K562 (cell line): ENCODE measurements at regions of chr15 and their contacts with region 1.

Region 1: DNA sequence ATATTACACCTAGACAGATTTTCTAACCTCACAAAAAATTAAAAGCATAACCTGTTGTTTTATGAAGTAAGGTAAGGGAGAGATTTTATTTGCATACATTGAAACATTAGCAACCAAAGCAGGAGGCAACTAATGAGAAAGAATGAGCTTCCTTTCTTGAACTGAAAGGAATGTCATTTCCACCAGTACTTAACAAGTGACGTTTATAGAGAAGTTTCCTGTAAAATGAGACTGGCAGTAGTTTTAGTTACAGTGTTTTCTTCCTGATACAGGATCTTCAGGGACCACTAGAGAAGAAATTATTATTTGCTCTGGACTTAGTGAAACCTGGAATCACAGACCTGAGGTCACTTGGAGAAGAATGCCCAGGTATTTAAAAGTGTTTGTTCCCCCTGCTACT is 27.4 kb upstream of the FRMD5 start:
- DNase-seq: no peak
- ATAC-seq: no peak
- H3K4me3 ChIP-seq: no peak overlapping the region
- H3K27ac ChIP-seq: no peak overlapping the region
- H3K4me1 ChIP-seq: no peaks in the 10 kb centered on the region; a peak in 1 of 5 replicates
- H3K27me3 ChIP-seq: peaks cover 0 to 5% of the 10 kb centered on the region in 2 experiments; a peak in 1 of 5 replicates
- CTCF ChIP-seq: no peak
- EP300 ChIP-seq: no peak
- POLR2A ChIP-seq: no peak
- RAD21 ChIP-seq: no peak

Region 2: GRCh38 chr15:44163370-44163769 is 59.1 kb before region 1 on chr15:
- CTCF ChIA-PET with region 1: no interaction called
- POLR2A ChIA-PET with region 1: interaction called, 3 read pairs
- in situ Hi-C with region 1: no loop called
- intact Hi-C with region 1: loop called (anchors 10 kb)
- DNase-seq: no peak
- ATAC-seq: no peak
- H3K4me3 ChIP-seq: no peak overlapping the region
- H3K27ac ChIP-seq: no peak overlapping the region
- H3K4me1 ChIP-seq: no peaks in the 10 kb centered on the region
- H3K27me3 ChIP-seq: peaks cover 5 to 37% of the 10 kb centered on the region in 2 experiments; a peak in 4 of 5 replicates
- CTCF ChIP-seq: no peak
- EP300 ChIP-seq: no peak
- POLR2A ChIP-seq: no peak
- RAD21 ChIP-seq: no peak

Region 3: GRCh38 chr15:44308415-44308814 is 85.9 kb after region 1 on chr15:
- CTCF ChIA-PET with region 1: no interaction called
- POLR2A ChIA-PET with region 1: no interaction called
- in situ Hi-C with region 1: no loop called
- intact Hi-C with region 1: no loop called
- DNase-seq: no peak
- ATAC-seq: no peak
- H3K4me3 ChIP-seq: no peak overlapping the region
- H3K27ac ChIP-seq: no peak overlapping the region
- H3K4me1 ChIP-seq: peaks cover 0 to 4% of the 10 kb centered on the region in 2 experiments; a peak in 3 of 5 replicates
- H3K27me3 ChIP-seq: no peaks in the 10 kb centered on the region
- CTCF ChIP-seq: no peak
- EP300 ChIP-seq: no peak
- POLR2A ChIP-seq: no peak
- RAD21 ChIP-seq: no peak